CD4-positive, alpha-beta T cell (primary cell): ENCODE measurements at regions of chr1 and their contacts with region 1.

Region 1: GRCh38 chr1:214123061-214123784 is 135.4 kb downstream of the PROX1 start:
- DNase-seq: peak in 12 of 14 experiments; percentile 1 to 66 (median 13)
- ATAC-seq: peak; percentile 68
- H3K4me3 ChIP-seq: no peak overlapping the region
- H3K4me3 Mint-ChIP-seq: no peak overlapping the region
- H3K27ac ChIP-seq: no peak overlapping the region
- H3K27ac Mint-ChIP-seq: no peak overlapping the region
- H3K4me1 ChIP-seq: no peaks in the 10 kb centered on the region
- H3K4me1 Mint-ChIP-seq: peaks cover 14% of the 10 kb centered on the region
- H3K27me3 ChIP-seq: no peaks in the 10 kb centered on the region
- H3K27me3 Mint-ChIP-seq: peaks cover 4% of the 10 kb centered on the region
- CTCF ChIP-seq: peak; percentile 46

Region 2: DNA sequence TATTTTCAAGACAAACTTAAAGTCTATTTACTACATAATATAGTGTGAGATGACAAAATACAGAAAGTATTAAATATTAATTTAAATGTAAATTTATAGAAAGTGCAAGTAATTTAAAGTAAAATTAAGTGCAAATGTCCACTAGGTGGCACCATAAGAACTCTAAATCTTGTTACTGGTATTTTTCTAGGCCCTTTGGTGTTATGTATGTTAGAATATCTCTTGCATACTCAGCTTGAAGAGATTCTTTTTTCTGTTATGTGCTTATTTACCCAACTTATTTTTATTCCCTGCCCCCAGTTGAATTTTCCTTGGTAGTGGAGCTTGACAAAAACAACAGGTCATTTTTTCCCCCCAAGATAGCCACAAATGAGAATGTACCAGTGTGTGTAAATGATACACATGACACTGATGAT is 1000.7 kb before region 1 on chr1:
- CTCF ChIA-PET with region 1: no interaction called
- POLR2A ChIA-PET with region 1: no interaction called
- intact Hi-C with region 1: loop called in 1 of 2 experiments (anchors 5 kb)
- DNase-seq: peak in 3 of 14 experiments; percentile 31 to 43 (median 42)
- ATAC-seq: no peak
- H3K4me3 ChIP-seq: no peak overlapping the region
- H3K4me3 Mint-ChIP-seq: no peak overlapping the region
- H3K27ac ChIP-seq: no peak overlapping the region
- H3K27ac Mint-ChIP-seq: no peak overlapping the region
- H3K4me1 ChIP-seq: no peaks in the 10 kb centered on the region
- H3K4me1 Mint-ChIP-seq: no peaks in the 10 kb centered on the region
- H3K27me3 ChIP-seq: no peaks in the 10 kb centered on the region
- H3K27me3 Mint-ChIP-seq: no peaks in the 10 kb centered on the region
- CTCF ChIP-seq: peak; percentile 83

Region 3: GRCh38 chr1:213244664-213245091 is 878.5 kb before region 1 on chr1:
- CTCF ChIA-PET with region 1: interaction called, 3 read pairs
- POLR2A ChIA-PET with region 1: no interaction called
- intact Hi-C with region 1: loop called (anchors 1 to 2 kb)
- DNase-seq: peak in 5 of 14 experiments; percentile 2 to 62 (median 38)
- ATAC-seq: no peak
- H3K4me3 ChIP-seq: no peak overlapping the region
- H3K4me3 Mint-ChIP-seq: no peak overlapping the region
- H3K27ac ChIP-seq: no peak overlapping the region
- H3K27ac Mint-ChIP-seq: no peak overlapping the region
- H3K4me1 ChIP-seq: no peaks in the 10 kb centered on the region
- H3K4me1 Mint-ChIP-seq: no peaks in the 10 kb centered on the region
- H3K27me3 ChIP-seq: no peaks in the 10 kb centered on the region
- H3K27me3 Mint-ChIP-seq: no peaks in the 10 kb centered on the region
- CTCF ChIP-seq: peak; percentile 98

Region 4: DNA sequence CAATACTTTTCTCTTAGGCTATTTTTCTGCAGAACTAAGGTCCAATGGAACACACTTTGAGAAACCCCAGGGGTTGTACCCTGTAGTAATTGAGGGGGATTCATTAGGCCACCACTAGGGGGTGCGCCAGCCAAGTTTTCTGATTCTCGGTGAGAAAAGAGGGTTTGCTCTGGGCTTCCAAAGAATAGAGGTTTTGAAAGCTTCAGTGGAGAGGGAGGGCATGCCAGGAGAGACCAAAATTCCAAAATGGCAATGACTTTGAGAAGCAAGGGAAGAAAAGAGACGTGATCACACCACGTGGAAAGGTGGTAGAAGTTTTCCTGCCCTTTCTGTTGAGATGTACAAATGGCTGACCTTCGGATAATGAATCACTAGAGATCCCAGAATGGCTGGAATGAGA is 748.9 kb before region 1 on chr1:
- CTCF ChIA-PET with region 1: no interaction called
- POLR2A ChIA-PET with region 1: no interaction called
- intact Hi-C with region 1: loop called in 1 of 2 experiments (anchors 1 kb)
- DNase-seq: peak; percentile 16 to 66 (median 42)
- ATAC-seq: no peak
- H3K4me3 ChIP-seq: no peak overlapping the region
- H3K4me3 Mint-ChIP-seq: no peak overlapping the region
- H3K27ac ChIP-seq: no peak overlapping the region
- H3K27ac Mint-ChIP-seq: no peak overlapping the region
- H3K4me1 ChIP-seq: no peaks in the 10 kb centered on the region
- H3K4me1 Mint-ChIP-seq: no peaks in the 10 kb centered on the region
- H3K27me3 ChIP-seq: no peaks in the 10 kb centered on the region
- H3K27me3 Mint-ChIP-seq: no peaks in the 10 kb centered on the region
- CTCF ChIP-seq: peak; percentile 77

Region 5: DNA sequence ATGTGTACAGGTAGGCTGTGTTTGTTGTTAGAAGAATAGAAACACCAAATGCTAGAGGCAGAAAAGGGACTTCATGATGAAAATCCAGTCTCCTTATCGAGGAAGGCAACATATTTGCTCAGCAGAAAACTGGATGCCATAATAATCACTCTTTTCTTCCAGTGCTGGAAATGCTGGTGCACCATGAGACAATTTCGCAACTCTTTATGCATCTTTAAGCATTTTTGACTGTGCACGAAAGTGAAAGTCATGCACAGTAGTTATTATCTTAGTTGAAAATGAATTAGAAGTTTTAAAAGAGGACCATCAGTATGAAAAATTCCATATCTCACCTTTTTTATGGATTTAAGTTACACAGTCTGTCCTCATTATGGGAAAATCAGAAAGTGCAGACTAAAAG is 186.8 kb after region 1 on chr1:
- CTCF ChIA-PET with region 1: no interaction called
- POLR2A ChIA-PET with region 1: no interaction called
- intact Hi-C with region 1: no loop called
- DNase-seq: no peak
- ATAC-seq: no peak
- H3K4me3 ChIP-seq: peak overlapping the region; percentile 0
- H3K4me3 Mint-ChIP-seq: peak overlapping the region; percentile 35
- H3K27ac ChIP-seq: no peak overlapping the region
- H3K27ac Mint-ChIP-seq: no peak overlapping the region
- H3K4me1 ChIP-seq: peaks cover 14% of the 10 kb centered on the region
- H3K4me1 Mint-ChIP-seq: peaks cover 50% of the 10 kb centered on the region
- H3K27me3 ChIP-seq: no peaks in the 10 kb centered on the region
- H3K27me3 Mint-ChIP-seq: no peaks in the 10 kb centered on the region
- CTCF ChIP-seq: no peak